ENCODE measurements at regions of chr9 and their contacts with region 1.

Region 1: DNA sequence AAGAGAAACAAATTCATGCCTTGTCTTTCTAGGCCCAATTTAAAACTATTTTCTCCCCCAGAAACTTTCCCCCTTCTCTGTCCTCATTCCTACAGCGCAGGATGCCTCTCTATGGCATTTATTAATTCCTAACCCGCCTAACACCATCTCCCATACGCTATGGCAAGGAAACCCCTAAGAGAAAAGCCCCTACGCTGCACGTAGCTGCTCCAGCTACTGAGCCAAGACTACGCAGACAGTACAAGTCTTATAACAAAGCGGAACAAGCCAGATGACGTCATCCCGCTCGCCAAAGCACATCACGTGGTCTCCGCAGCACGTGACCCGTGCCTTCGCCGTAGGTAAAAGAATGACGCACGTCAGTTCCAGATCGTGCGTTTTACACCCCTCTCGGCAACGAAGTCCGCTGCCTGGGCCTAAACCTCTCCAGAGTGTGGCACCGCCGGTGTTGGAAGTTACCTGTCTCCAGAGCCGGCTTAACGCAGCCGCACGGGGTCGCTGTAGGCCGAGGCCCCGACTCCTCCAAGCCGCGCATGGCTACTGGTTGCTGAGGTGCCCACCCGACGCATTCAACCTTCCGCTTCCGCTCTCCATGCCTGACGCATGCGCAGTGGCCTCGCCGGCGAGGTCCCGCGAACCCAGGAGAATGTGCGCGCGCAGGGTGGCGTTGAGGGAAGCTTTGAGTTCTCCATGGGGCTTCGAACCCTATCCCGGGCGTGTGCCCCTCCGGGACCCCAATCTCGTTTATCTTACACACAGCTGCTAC is at the start of gene TRMO:
- DNase-seq: peak; percentile 99
- ATAC-seq: peak; percentile 83
- H3K4me3 Mint-ChIP-seq: peak within 1 kb of the TSS; percentile 96
- H3K27ac Mint-ChIP-seq: peak within 1 kb of the TSS; percentile 100
- H3K4me1 Mint-ChIP-seq: peaks cover 37% of the 10 kb centered on the region
- H3K27me3 Mint-ChIP-seq: peaks cover 4% of the 10 kb centered on the region
- total RNA-seq, gene TRMO: 25.6 to 27.6 TPM

Region 2: DNA sequence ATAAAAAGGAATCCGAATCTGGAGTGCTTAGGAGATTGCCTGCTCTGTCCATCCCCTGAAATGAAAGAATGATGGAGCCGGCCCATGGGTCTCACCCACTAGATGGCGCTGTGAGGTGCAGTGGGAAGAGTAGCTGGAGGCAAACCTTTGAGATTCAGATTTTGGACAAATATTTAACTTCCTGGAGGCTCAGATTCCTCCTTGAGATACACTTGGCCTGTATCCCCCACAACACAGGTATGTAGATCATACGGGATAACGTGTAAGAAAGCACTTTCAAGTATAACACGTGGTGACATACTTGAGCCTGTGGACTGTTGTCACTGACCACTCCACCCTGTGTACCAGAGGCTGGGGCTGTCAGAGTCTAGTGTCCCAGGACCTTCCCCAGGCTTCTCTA is 32.1 kb before region 1 on chr9:
- POLR2A ChIA-PET with region 1: interaction called, 15 read pairs
- DNase-seq: peak; percentile 74
- ATAC-seq: peak; percentile 71
- H3K4me3 Mint-ChIP-seq: no peak overlapping the region
- H3K27ac Mint-ChIP-seq: no peak overlapping the region
- H3K4me1 Mint-ChIP-seq: peaks cover 5% of the 10 kb centered on the region
- H3K27me3 Mint-ChIP-seq: no peaks in the 10 kb centered on the region

Region 3: GRCh38 chr9:97900738-97901565 is 21.2 kb before region 1 on chr9:
- POLR2A ChIA-PET with region 1: interaction called, 125 read pairs
- DNase-seq: no peak
- ATAC-seq: no peak
- H3K4me3 Mint-ChIP-seq: no peak overlapping the region
- H3K27ac Mint-ChIP-seq: no peak overlapping the region
- H3K4me1 Mint-ChIP-seq: peaks cover 32% of the 10 kb centered on the region
- H3K27me3 Mint-ChIP-seq: no peaks in the 10 kb centered on the region

Region 4: DNA sequence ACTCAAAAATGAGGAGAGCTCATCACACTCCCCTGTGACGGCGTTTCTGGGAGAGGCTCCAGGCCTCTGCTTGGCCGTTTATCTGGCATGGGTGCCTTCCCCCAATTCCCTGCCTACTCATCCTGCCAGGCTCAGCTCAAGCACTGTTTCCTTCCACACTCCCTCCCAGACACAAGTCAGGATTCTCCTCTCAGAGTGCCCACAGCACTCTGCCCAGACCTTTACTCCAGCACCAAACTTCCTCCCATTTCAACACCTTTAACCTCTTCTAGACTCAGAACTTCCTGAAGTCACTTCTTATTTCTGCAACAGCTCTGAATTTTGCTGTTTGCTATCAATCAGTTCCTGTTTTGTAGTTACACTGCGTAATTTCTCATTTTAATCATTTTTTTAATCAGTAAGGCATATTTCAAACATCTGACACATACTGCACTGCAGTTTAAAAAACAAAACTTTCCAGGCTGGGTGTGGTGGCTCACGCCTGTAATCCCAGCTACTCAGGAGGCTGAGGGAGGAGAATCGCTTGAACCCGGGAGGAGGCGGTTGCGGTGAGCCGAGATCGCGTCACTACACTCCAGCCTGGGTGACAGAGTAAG is 15.8 kb before region 1 on chr9:
- POLR2A ChIA-PET with region 1: interaction called, 125 read pairs
- DNase-seq: no peak
- ATAC-seq: no peak
- H3K4me3 Mint-ChIP-seq: peak overlapping the region; percentile 84
- H3K27ac Mint-ChIP-seq: peak overlapping the region; percentile 99
- H3K4me1 Mint-ChIP-seq: peaks cover 49% of the 10 kb centered on the region
- H3K27me3 Mint-ChIP-seq: no peaks in the 10 kb centered on the region

Region 5: DNA sequence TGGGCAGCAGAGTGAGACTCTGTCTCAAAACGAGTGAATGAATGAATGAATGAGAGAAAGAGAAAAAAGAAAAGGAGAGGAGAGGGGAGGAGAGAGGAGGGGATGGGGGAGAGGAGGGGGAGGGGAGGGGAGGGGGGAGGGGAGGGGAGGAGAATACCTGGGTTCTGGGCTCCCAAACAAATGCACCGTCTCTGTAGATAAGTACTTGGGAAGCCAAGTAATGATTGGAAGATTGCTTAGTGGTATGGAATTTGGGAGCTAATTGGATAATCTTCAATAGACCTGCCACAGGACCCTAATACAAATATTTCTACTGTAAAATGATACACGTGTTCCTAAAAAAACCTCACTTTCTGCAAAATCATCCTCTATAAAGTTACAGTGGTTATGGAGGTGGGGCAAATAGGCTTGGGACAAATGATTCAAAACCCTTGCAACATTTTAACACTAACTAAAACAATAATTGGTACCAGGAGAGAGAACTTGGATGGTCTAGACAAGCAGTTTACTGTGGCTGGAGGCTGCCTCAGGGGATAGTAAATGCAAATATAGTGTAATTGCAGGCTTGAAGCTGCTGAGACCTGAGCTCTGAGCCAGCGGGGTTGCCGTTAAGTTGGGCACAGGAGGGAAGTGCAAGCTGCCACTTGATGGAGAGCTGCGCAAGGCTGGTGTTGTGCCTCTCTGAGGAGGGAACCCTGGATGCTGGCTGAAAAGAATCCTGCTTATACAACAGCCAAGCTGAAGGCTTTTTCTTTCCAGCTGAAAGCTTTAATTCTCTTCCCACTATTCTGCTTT is 12.4 kb after region 1 on chr9:
- POLR2A ChIA-PET with region 1: interaction called, 11 read pairs
- DNase-seq: no peak
- ATAC-seq: no peak
- H3K4me3 Mint-ChIP-seq: no peak overlapping the region
- H3K27ac Mint-ChIP-seq: no peak overlapping the region
- H3K4me1 Mint-ChIP-seq: peaks cover 33% of the 10 kb centered on the region
- H3K27me3 Mint-ChIP-seq: no peaks in the 10 kb centered on the region

Region 6: DNA sequence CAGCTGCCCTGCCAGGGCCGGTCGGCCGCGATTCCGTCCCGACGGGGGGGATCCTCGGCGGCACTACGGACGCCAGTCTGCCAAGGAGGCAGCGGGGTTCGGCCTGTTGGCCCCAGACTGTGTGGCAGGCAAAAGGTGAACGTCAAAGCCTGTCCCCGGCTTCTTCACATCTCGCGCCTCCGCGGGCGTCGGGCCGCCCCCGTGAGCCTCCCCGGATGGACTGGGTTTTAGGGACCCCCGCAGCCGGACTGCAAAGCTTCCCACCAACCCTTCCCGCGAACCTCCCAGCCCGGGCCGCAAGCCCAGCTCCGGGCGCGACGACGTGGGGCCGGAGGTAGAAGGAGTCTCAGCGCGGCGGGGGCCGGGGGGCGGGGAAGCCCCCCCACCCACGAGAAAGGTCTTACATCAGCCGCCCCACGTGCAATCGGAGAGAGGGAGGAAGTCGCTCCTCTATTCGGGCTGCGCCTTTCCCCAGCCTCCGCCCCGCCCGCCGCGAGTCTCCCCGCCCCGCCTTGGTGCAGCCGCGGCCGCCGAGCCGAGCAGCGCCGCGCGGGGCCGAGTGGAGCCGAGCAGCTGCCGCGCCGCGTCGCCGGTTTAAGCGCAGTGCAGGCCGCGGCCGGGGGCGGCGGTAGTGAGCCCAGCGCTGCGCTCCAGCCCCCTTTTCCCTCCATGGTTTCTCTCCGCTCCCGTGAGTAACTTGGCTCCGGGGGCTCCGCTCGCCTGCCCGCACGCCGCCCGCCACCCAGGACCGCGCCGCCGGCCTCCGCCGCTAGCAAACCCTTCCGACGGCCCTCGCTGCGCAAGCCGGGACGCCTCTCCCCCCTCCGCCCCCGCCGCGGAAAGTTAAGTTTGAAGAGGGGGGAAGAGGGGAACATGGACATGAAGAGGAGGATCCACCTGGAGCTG is 60.8 kb after region 1 on chr9 and contains the start of gene ANP32B:
- POLR2A ChIA-PET with region 1: interaction called, 79 read pairs
- DNase-seq: peak; percentile 99
- ATAC-seq: peak; percentile 88
- H3K4me3 Mint-ChIP-seq: peak within 1 kb of the TSS; percentile 86
- H3K27ac Mint-ChIP-seq: peak within 1 kb of the TSS; percentile 89
- H3K4me1 Mint-ChIP-seq: peaks cover 38% of the 10 kb centered on the region
- H3K27me3 Mint-ChIP-seq: no peaks in the 10 kb centered on the region
- total RNA-seq, gene ANP32B: 295 to 296 TPM

Region 7: GRCh38 chr9:98045234-98046179 is 123.4 kb after region 1 on chr9:
- POLR2A ChIA-PET with region 1: interaction called, 19 read pairs
- DNase-seq: no peak
- ATAC-seq: peak; percentile 94
- H3K4me3 Mint-ChIP-seq: peak overlapping the region; percentile 88
- H3K27ac Mint-ChIP-seq: peak overlapping the region; percentile 98
- H3K4me1 Mint-ChIP-seq: peaks cover 27% of the 10 kb centered on the region
- H3K27me3 Mint-ChIP-seq: peaks cover 7% of the 10 kb centered on the region

Measured in activated naive CD8-positive, alpha-beta T cell treated with anti-CD3 and anti-CD28 coated beads, Interleukin-2, amount 10 ng/mL, durations not matched to agents 7 days and 5 days (primary cell).